IMR-90 (cell line): ENCODE measurements at regions of chr5 and their contacts with region 1.

Region 1: DNA sequence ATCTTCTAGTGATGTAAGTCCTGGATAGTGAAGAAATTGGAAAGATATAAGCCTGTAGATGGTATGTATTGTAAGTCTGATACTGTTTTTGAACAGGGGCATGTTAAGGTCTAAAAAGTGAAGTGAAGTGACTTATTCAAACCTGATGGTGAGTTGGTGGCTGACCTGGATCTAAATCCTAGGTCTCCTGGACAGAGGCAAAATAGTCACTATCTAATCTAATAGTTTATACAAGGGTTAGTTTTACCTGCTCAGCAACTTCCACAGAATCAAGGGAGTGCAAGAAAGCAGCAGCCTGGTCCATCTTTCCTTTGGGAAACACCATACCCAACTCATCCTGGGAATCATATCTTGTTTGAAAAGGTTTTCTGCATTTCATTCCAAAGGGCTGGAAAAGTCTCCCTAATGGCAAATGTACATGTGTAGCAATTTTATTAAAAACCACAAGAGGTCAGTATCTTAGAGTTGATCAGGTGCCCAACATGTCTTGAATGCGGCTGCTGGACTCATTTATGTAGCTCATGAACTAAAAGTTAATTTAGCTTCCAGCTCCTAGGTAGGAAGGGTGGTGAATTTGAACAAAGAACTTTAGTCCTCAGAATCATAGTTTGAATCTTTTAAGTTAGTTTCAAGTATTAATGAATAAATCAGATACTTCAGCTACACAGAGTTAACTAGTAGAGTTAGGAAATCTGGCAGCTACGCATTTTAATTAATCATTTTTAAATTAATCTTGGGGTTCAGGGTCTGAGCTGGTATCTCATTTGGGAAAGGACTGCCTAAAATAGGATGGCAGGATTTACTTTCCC is 26.0 kb downstream of the SKP2 start:
- DNase-seq: peak; percentile 65
- ATAC-seq: peak; percentile 77
- H3K4me3 ChIP-seq: no peak overlapping the region
- H3K27ac ChIP-seq: no peak overlapping the region
- H3K4me1 ChIP-seq: 0 out of 2 replicates have a peak, but pooled peaks cover 5% of the 10 kb centered on the region
- H3K27me3 ChIP-seq: no peaks in the 10 kb centered on the region
- CTCF ChIP-seq: peak; percentile 63
- POLR2A ChIP-seq: no peak
- RAD21 ChIP-seq: peak; percentile 63

Region 2: DNA sequence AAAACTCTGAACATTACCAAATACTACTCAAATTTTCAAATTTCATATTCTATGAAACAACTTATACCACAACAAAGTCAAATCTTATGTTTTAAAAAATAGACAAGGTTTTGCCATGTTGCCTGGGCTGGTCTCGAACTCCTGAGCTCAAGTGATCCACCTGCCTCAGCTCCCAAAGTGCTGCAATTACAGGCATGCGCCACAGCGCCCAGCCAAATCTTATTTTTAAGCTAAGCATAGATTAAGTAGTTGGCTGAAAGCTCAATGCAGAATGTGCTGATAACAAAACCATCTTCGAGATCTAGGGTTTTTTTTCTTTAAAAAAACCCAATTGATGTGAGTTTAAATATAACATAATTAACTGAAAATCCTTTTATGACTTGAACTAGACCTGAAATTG is 32.6 kb before region 1 on chr5:
- CTCF ChIA-PET with region 1: no interaction called
- POLR2A ChIA-PET with region 1: no interaction called
- dilution Hi-C with region 1: no loop called
- in situ Hi-C with region 1: no loop called
- intact Hi-C with region 1: no loop called
- DNase-seq: no peak
- ATAC-seq: no peak
- H3K4me3 ChIP-seq: no peak overlapping the region
- H3K27ac ChIP-seq: no peak overlapping the region
- H3K4me1 ChIP-seq: peaks cover 3% of the 10 kb centered on the region; the same call in 1 of the 2 replicates
- H3K27me3 ChIP-seq: no peaks in the 10 kb centered on the region
- CTCF ChIP-seq: no peak
- POLR2A ChIP-seq: no peak
- RAD21 ChIP-seq: no peak

Region 3: DNA sequence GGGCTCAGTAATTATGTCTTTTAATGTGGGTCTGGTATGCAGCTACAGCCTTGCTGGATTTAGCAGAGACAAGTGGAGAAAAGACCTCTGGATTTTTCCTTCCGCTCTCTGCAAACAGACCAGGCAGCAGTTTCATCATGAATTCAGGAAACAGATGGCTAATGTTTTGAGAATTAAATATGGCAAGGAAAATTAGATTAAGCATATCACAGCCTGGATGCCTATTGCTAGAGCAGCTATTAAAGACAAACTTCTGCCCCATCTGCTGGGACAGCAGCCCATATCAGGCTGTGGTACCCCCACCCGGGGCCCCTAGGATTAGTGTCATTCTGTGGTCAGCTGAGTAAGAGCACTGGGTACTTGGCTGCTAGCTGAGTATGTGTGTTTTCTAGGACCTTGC is 19.8 kb before region 1 on chr5:
- CTCF ChIA-PET with region 1: no interaction called
- POLR2A ChIA-PET with region 1: no interaction called
- dilution Hi-C with region 1: no loop called
- in situ Hi-C with region 1: no loop called
- intact Hi-C with region 1: loop called (anchors 2 kb)
- DNase-seq: peak; percentile 7
- ATAC-seq: no peak
- H3K4me3 ChIP-seq: no peak overlapping the region
- H3K27ac ChIP-seq: peak overlapping the region; percentile 5; the same call in 1 of the 2 replicates
- H3K4me1 ChIP-seq: peaks cover 20% of the 10 kb centered on the region
- H3K27me3 ChIP-seq: no peaks in the 10 kb centered on the region
- CTCF ChIP-seq: no peak
- POLR2A ChIP-seq: no peak
- RAD21 ChIP-seq: no peak